ENCODE measurements at regions of chr7 and their contacts with region 1.

Region 1: DNA sequence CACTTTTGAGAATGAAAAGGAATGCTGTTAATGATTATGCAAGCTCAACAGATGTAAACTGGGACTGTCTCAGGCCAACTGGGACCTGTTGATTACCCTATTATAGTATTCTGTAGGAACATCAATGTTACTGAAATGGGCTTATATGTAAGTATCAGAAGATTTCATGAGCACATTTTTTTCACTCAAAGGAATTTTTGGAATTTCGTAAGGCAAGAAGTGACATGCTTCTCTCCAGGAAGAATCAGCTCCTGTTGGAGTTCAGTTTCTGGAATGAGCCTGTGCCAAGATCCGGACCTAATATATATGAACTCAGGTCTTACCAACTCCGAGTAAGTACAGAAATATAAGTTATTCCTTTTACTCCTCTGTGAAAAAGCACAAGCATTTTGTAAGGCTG is 19.2 kb downstream of the NIPSNAP2 start:
- DNase-seq: no peak
- ATAC-seq: no peak

Region 2: DNA sequence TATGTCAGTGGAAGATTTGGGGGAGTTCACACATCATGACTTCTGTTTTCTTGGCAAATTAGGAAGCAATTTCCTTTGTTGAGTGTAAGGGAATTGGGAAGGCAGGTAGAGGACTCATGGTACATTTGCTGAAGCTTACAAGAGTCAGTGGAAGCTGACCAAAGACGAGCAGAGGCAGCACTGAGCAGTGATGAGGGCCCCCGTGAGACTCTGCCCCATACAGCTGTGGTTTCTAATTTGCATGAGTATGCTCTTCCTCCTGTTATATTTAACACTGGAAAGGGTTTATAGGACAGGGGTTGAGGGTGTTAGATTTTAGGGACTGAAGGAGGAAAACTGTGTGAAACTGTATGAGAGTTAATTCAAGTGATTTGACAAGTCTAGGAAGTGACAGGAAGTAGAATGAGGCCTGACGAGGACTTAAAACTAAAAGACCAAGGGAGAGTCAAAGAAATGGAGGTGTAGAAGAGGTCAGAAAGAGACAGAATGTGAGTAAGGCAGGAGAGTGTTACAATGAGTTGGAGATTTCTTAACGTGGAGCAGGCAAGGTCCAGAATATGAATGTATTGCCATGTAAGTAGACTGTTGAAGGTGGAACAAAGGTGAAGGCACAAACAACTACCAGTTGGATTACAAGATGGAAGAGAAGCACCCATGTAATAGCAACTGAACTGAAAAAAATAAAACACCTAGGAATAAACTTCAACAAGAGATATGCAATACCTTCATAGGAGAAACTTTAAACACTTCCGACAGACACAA is 55.4 kb before region 1 on chr7:
- intact Hi-C with region 1: no loop called
- DNase-seq: no peak
- ATAC-seq: no peak

Region 3: GRCh38 chr7:56046721-56047445 is 63.3 kb after region 1 on chr7:
- intact Hi-C with region 1: no loop called
- DNase-seq: no peak
- ATAC-seq: no peak

Region 4: GRCh38 chr7:56063882-56064625 is 80.5 kb after region 1 on chr7 and contains the start of gene SUMF2:
- intact Hi-C with region 1: loop called in 1 of 2 experiments (anchors 5 kb)
- DNase-seq: peak; percentile 93
- ATAC-seq: peak; percentile 99
- total RNA-seq, gene SUMF2: 50.6 to 52.5 TPM

Measured in left cardiac atrium (tissue), 4 donors.